ENCODE measurements at regions of chr1 and their contacts with region 1.

Region 1: GRCh38 chr1:107430540-107431228 is 289.8 kb downstream of the NTNG1 start:
- DNase-seq: peak in 1 of 5 donors; percentile 8
- ATAC-seq: no peak
- H3K4me3 ChIP-seq: no peak overlapping the region
- H3K27ac ChIP-seq: no peak overlapping the region
- H3K4me1 ChIP-seq: no peaks in the 10 kb centered on the region
- H3K27me3 ChIP-seq: peaks cover 0 to 4% (median 0%) of the 10 kb centered on the region in 9 donors
- CTCF ChIP-seq: peak; percentile 21 to 65 (median 39)
- POLR2A ChIP-seq: no peak

Region 2: GRCh38 chr1:107171333-107171732 is 259.4 kb before region 1 on chr1:
- intact Hi-C with region 1: no loop called
- DNase-seq: no peak
- ATAC-seq: no peak
- H3K4me3 ChIP-seq: no peak overlapping the region
- H3K27ac ChIP-seq: no peak overlapping the region
- H3K4me1 ChIP-seq: no peaks in the 10 kb centered on the region
- H3K27me3 ChIP-seq: no peaks in the 10 kb centered on the region
- CTCF ChIP-seq: no peak
- POLR2A ChIP-seq: no peak

Region 3: GRCh38 chr1:107750358-107750959 is 319.8 kb after region 1 on chr1:
- intact Hi-C with region 1: loop called in 2 of 10 experiments (anchors 5 to 10 kb)
- DNase-seq: peak in 2 of 5 donors; percentile 13 to 26
- ATAC-seq: no peak
- H3K4me3 ChIP-seq: no peak overlapping the region
- H3K27ac ChIP-seq: no peak overlapping the region
- H3K4me1 ChIP-seq: no peaks in the 10 kb centered on the region
- H3K27me3 ChIP-seq: no peaks in the 10 kb centered on the region
- CTCF ChIP-seq: peak in 7 of 12 donors; percentile 34 to 60 (median 48)
- POLR2A ChIP-seq: no peak

Measured in heart left ventricle (tissue), 16 donors.